Caco-2 (cell line): ENCODE measurements at regions of chr6 and their contacts with region 1.

Region 1: GRCh38 chr6:89311853-89312531 is 3.1 kb downstream of the GABRR2 start:
- DNase-seq: peak in 1 of 2 experiments; percentile 48
- H3K4me3 ChIP-seq: no peak overlapping the region
- H3K4me3 Mint-ChIP-seq: no peak overlapping the region
- H3K27ac Mint-ChIP-seq: peak overlapping the region; percentile 71
- H3K4me1 ChIP-seq: peaks cover 4% of the 10 kb centered on the region
- H3K4me1 Mint-ChIP-seq: peaks cover 19% of the 10 kb centered on the region
- H3K27me3 ChIP-seq: no peaks in the 10 kb centered on the region
- H3K27me3 Mint-ChIP-seq: no peaks in the 10 kb centered on the region
- CTCF ChIP-seq: peak in 1 of 2 experiments; percentile 63

Region 2: GRCh38 chr6:89352278-89353117 is 40.5 kb after region 1 on chr6 and contains the start of gene UBE2J1:
- CTCF ChIA-PET with region 1: no interaction called
- POLR2A ChIA-PET with region 1: interaction called, 3 read pairs
- intact Hi-C with region 1: loop called (anchors 5 kb)
- DNase-seq: peak; percentile 93 to 95
- H3K4me3 ChIP-seq: peak within 1 kb of the TSS; percentile 92
- H3K4me3 Mint-ChIP-seq: peak within 1 kb of the TSS; percentile 96
- H3K27ac Mint-ChIP-seq: peak within 1 kb of the TSS; percentile 91
- H3K4me1 ChIP-seq: peaks cover 28% of the 10 kb centered on the region
- H3K4me1 Mint-ChIP-seq: peaks cover 22% of the 10 kb centered on the region
- H3K27me3 ChIP-seq: no peaks in the 10 kb centered on the region
- H3K27me3 Mint-ChIP-seq: no peaks in the 10 kb centered on the region
- CTCF ChIP-seq: no peak
- total RNA-seq, gene UBE2J1: 23.1 and 23.5 TPM in 2 replicates